AG04450 (cell line): ENCODE measurements at regions of chr11 and their contacts with region 1.

Region 1: GRCh38 chr11:85685820-85686459 is at the start of gene CCDC89:
- DNase-seq: peak; percentile 97
- H3K4me3 ChIP-seq: peak within 1 kb of the TSS; percentile 69
- H3K27ac ChIP-seq: peak within 1 kb of the TSS; percentile 80
- H3K27me3 ChIP-seq: no peaks in the 10 kb centered on the region
- CTCF ChIP-seq: no peak
- polyA plus RNA-seq, gene CCDC89: 2.5 and 2.7 TPM in 2 replicates

Region 2: GRCh38 chr11:85257837-85258236 is 428.1 kb before region 1 on chr11:
- CTCF ChIA-PET with region 1: no interaction called
- POLR2A ChIA-PET with region 1: no interaction called
- DNase-seq: no peak
- H3K4me3 ChIP-seq: no peak overlapping the region
- H3K27ac ChIP-seq: no peak overlapping the region
- H3K27me3 ChIP-seq: no peaks in the 10 kb centered on the region
- CTCF ChIP-seq: no peak

Region 3: DNA sequence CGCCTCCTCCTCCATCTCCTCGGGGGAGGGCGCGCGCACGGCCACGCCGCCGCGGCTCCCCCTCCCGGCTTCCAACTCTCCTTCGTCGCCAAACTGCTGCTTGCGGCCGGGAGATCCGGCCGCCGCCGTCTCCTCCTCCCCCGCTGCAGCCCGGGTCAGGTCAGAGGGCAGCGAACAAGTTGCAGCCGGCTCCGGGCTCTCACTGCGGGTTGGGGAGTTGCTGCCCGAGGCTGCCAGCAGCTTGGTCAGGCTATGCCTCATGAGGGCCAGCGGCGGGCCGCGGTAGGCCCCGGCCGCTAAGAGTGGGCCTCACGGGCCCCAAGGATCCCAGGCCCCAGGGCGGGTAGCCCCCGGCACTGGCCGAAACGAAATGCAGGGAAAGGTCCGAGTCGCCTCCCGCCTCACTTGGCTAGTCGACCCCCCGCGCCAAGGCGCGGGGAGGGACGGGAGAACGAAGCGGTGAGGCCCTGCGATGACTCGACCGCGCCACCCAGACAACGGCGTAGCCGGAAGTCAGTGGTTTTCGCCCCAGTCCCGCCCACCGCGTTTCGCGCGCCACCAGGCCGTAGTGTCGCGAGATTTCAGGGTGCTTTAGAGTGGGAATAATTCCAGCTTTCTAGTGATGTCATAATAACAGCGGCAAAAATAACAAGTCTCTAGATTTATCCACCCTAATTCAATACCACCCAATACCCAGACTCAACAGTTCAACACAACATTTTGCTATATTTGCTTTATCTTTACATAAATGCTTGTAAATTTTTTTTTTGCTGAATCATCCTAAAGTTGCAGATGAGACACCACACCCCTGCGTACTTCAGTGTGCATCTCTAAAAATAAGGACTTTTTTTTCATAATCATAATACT is 21.1 kb before region 1 on chr11 and contains the start of gene CREBZF:
- CTCF ChIA-PET with region 1: interaction called, 3 read pairs
- POLR2A ChIA-PET with region 1: interaction called, 43 read pairs
- DNase-seq: peak; percentile 87
- H3K4me3 ChIP-seq: peak within 1 kb of the TSS; percentile 91
- H3K27ac ChIP-seq: peak within 1 kb of the TSS; percentile 97
- H3K27me3 ChIP-seq: no peaks in the 10 kb centered on the region
- CTCF ChIP-seq: no peak
- polyA plus RNA-seq, gene CREBZF: 19.3 and 25.0 TPM in 2 replicates

Region 4: GRCh38 chr11:85718991-85719807 is 33.3 kb after region 1 on chr11:
- CTCF ChIA-PET with region 1: no interaction called
- POLR2A ChIA-PET with region 1: interaction called, 19 read pairs
- DNase-seq: peak; percentile 97
- H3K4me3 ChIP-seq: peak overlapping the region; percentile 64
- H3K27ac ChIP-seq: peak overlapping the region; percentile 97
- H3K27me3 ChIP-seq: no peaks in the 10 kb centered on the region
- CTCF ChIP-seq: no peak